Heart left ventricle (tissue), 16 donors: ENCODE measurements at regions of chr5 and their contacts with region 1.

Region 1: GRCh38 chr5:141245250-141245717 is at the start of gene PCDHB15:
- DNase-seq: peak in 2 of 5 donors; percentile 19 to 30
- ATAC-seq: peak; percentile 26 to 60 (median 32)
- H3K4me3 ChIP-seq: peak within 1 kb of the TSS in 11 of 12 donors; percentile 23 to 60 (median 50)
- H3K27ac ChIP-seq: peak within 1 kb of the TSS in 2 of 12 donors; percentile 18 to 62
- H3K4me1 ChIP-seq: peaks cover 0 to 2% (median 0%) of the 10 kb centered on the region in 12 donors
- H3K27me3 ChIP-seq: peaks cover 0 to 19% (median 4%) of the 10 kb centered on the region in 9 donors
- CTCF ChIP-seq: peak in 11 of 12 donors; percentile 18 to 58 (median 45)
- POLR2A ChIP-seq: no peak
- total RNA-seq, gene PCDHB15: 3.7 to 7.5 (median 4.5) TPM

Region 2: GRCh38 chr5:141192110-141192732 is 53.1 kb before region 1 on chr5 and contains the start of gene PCDHB10:
- intact Hi-C with region 1: loop called in 1 of 10 experiments (anchors 10 kb)
- DNase-seq: no peak
- ATAC-seq: no peak
- H3K4me3 ChIP-seq: peak within 1 kb of the TSS in 2 of 12 donors; percentile 3 to 29
- H3K27ac ChIP-seq: no peak within 1 kb of the TSS
- H3K4me1 ChIP-seq: no peaks in the 10 kb centered on the region
- H3K27me3 ChIP-seq: peaks cover 0 to 17% (median 0%) of the 10 kb centered on the region in 9 donors
- CTCF ChIP-seq: peak in 8 of 12 donors; percentile 12 to 51 (median 42)
- POLR2A ChIP-seq: no peak
- total RNA-seq, gene PCDHB10: 0.35 to 1.4 (median 0.91) TPM

Region 3: DNA sequence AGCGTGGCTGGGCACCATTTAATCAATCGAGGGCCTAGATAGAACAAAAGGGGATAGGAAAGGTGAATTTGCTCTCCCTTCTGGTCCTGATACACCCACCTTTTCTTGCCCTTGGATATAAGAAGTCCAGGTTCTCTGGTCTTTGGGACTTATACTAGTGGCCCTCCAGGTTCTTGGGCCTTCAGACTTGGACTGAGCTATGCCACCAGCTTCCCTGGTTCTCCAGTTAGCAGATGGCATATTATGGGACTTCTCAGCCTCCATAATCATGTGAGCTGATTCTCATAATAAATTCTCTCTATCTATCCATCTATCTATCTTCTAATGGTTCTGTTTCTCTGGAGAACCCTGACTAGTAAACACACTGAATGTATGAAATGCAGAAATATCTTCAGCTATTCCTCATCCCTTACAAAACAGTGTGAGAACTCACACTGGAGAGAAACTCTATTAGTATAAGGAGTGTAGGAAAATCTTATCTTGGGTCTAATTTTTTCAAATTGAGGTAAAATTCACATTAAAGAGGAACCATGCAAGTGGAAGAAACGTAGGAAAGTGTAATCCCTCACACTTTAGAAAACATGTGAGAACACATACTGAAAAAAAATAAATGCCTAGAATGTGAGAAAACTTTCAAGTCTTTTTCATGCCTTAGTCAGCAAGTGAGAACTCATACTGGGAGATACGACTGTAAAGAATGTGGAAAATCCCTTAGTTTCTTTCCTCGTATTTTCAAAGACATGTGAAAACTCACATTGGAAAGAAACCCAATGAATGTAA is 15.4 kb after region 1 on chr5:
- intact Hi-C with region 1: no loop called
- DNase-seq: no peak
- ATAC-seq: no peak
- H3K4me3 ChIP-seq: no peak overlapping the region
- H3K27ac ChIP-seq: no peak overlapping the region
- H3K4me1 ChIP-seq: no peaks in the 10 kb centered on the region
- H3K27me3 ChIP-seq: no peaks in the 10 kb centered on the region
- CTCF ChIP-seq: no peak
- POLR2A ChIP-seq: no peak

Region 4: GRCh38 chr5:141298376-141298775 is 53.1 kb after region 1 on chr5:
- intact Hi-C with region 1: no loop called
- DNase-seq: no peak
- ATAC-seq: no peak
- H3K4me3 ChIP-seq: no peak overlapping the region
- H3K27ac ChIP-seq: peak overlapping the region in 1 of 12 donors; percentile 10
- H3K4me1 ChIP-seq: no peaks in the 10 kb centered on the region
- H3K27me3 ChIP-seq: no peaks in the 10 kb centered on the region
- CTCF ChIP-seq: no peak
- POLR2A ChIP-seq: no peak

Region 5: GRCh38 chr5:141313711-141314110 is 68.4 kb after region 1 on chr5:
- intact Hi-C with region 1: loop called in 1 of 10 experiments (anchors 10 kb)
- DNase-seq: no peak
- ATAC-seq: no peak
- H3K4me3 ChIP-seq: no peak overlapping the region
- H3K27ac ChIP-seq: no peak overlapping the region
- H3K4me1 ChIP-seq: peaks cover 0 to 5% (median 0%) of the 10 kb centered on the region in 12 donors
- H3K27me3 ChIP-seq: no peaks in the 10 kb centered on the region
- CTCF ChIP-seq: no peak
- POLR2A ChIP-seq: no peak

Region 6: DNA sequence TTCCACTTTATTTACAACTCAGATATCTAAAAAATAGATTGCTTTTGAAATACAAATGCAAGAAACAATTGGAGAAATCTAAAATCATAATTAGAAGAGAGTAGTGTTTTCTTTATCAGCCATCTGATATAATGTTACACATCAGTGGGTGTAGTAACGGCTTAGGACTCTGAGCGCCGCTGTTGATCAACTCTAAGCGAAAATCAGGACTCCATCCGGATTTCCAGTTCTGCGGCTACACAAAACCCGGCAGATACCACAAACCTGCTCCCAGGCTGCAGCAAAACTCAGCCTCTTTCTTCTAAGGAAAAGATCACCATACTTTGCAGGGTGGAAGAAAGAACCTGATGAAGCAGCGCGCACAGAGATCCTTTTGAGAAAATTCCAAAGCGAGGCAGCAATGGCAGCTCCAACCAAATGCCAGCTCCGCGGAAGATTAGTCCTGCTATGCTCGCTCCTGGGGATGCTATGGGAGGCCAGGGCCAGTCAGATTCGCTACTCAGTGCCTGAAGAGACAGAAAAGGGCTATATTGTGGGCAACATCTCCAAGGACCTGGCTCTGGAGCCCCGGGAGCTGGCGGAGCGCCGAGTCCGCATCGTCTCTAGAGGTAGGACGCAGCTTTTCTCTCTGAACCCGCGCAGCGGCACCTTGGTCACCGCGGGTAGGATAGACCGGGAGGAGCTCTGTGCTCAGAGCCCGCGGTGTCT is 157.4 kb after region 1 on chr5 and contains the start of gene PCDHGA9:
- intact Hi-C with region 1: loop called in 1 of 10 experiments (anchors 10 kb)
- DNase-seq: no peak
- ATAC-seq: no peak
- H3K4me3 ChIP-seq: peak within 1 kb of the TSS in 9 of 12 donors; percentile 11 to 35 (median 23)
- H3K27ac ChIP-seq: no peak within 1 kb of the TSS
- H3K4me1 ChIP-seq: peaks cover 0 to 13% (median 0%) of the 10 kb centered on the region in 12 donors
- H3K27me3 ChIP-seq: peaks cover 0 to 46% (median 0%) of the 10 kb centered on the region in 9 donors
- CTCF ChIP-seq: peak in 8 of 12 donors; percentile 9 to 32 (median 18)
- POLR2A ChIP-seq: no peak
- total RNA-seq, gene PCDHGA9: 2.3 to 9.6 (median 5.3) TPM